ENCODE measurements at regions of chr2 and their contacts with region 1.

Region 1: GRCh38 chr2:239267288-239267951 is 133.4 kb downstream of the HDAC4 start:
- DNase-seq: peak; percentile 75
- ATAC-seq: peak; percentile 96
- H3K4me3 Mint-ChIP-seq: peak overlapping the region; percentile 73
- H3K27ac Mint-ChIP-seq: peak overlapping the region; percentile 44
- H3K4me1 Mint-ChIP-seq: peaks cover 59% of the 10 kb centered on the region
- H3K27me3 Mint-ChIP-seq: peaks cover 55% of the 10 kb centered on the region
- CTCF ChIP-seq: no peak

Region 2: DNA sequence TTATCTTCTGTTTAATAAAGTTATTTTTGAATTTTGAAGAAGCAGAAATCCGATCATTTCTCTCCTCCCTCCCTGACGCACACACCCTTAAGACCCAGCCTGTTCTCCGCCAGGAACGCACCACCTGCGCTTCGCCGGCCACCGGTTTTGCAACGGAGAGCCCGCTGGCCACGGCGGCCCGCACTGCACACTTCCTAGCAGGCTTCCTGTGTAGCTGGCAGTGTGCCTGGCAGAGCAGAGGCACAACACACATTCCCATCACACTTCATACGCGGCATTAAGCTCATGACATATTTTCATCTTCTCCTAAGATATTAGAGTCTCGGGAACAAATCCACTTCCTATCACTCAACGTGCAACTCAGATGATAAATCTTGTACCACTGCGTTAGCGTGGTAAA is 14.6 kb before region 1 on chr2:
- CTCF ChIA-PET with region 1: interaction called, 11 read pairs
- POLR2A ChIA-PET with region 1: no interaction called
- intact Hi-C with region 1: loop called (anchors 1 kb)
- DNase-seq: no peak
- ATAC-seq: peak; percentile 49
- H3K4me3 Mint-ChIP-seq: peak overlapping the region; percentile 74
- H3K27ac Mint-ChIP-seq: no peak overlapping the region
- H3K4me1 Mint-ChIP-seq: peaks cover 51% of the 10 kb centered on the region
- H3K27me3 Mint-ChIP-seq: peaks cover 19% of the 10 kb centered on the region
- CTCF ChIP-seq: no peak

Region 3: GRCh38 chr2:239293775-239294430 is 26.5 kb after region 1 on chr2:
- CTCF ChIA-PET with region 1: interaction called, 12 read pairs
- POLR2A ChIA-PET with region 1: interaction called, 6 read pairs
- intact Hi-C with region 1: no loop called
- DNase-seq: no peak
- ATAC-seq: peak; percentile 85
- H3K4me3 Mint-ChIP-seq: peak overlapping the region; percentile 28
- H3K27ac Mint-ChIP-seq: no peak overlapping the region
- H3K4me1 Mint-ChIP-seq: peaks cover 71% of the 10 kb centered on the region
- H3K27me3 Mint-ChIP-seq: peaks cover 4% of the 10 kb centered on the region
- CTCF ChIP-seq: no peak

Region 4: DNA sequence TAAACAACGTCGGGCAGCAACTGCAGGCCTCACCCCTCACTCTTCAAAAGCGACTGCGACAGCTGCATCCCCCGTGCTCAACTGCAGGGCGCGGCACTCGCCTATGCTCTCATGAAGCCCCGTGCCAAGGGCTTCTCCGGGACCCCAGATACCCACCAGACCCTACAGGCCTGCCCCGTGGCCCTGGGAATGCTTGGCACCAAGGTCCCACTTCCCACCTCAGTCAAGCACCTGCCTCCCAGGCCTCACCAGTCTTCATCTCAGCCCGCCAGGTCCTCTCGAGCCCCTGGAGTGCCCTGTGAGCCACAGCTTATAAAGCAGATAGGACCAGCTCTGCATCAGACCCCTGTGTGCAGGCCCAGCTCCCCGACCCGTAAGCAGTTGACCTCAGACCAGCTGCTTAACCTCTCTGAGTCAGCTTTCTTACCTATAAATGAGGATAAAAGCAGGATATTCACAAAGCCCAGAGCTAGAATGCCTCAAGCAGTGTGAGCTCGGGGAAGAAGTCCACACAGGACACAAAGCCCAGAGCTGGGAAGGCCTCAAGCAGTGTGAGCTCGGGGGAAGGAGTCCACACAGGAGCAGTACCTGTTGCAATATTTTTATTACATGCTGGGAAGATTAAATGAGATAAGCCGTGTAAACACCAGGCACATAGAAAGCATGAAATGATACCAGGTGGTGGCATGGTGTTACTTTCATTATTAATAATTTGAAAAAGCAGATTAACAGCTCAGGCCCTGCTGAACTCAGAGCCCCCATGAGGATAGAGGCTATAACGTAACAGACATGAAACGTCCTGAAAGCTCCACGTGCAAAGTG is 36.5 kb after region 1 on chr2:
- CTCF ChIA-PET with region 1: interaction called, 4 read pairs
- POLR2A ChIA-PET with region 1: interaction called, 3 read pairs
- intact Hi-C with region 1: loop called (anchors 5 kb)
- DNase-seq: peak; percentile 13
- ATAC-seq: peak; percentile 82
- H3K4me3 Mint-ChIP-seq: peak overlapping the region; percentile 29
- H3K27ac Mint-ChIP-seq: peak overlapping the region; percentile 11
- H3K4me1 Mint-ChIP-seq: peaks cover 44% of the 10 kb centered on the region
- H3K27me3 Mint-ChIP-seq: no peaks in the 10 kb centered on the region
- CTCF ChIP-seq: no peak

Region 5: GRCh38 chr2:239380831-239381708 is 113.7 kb after region 1 on chr2:
- CTCF ChIA-PET with region 1: interaction called, 10 read pairs
- POLR2A ChIA-PET with region 1: interaction called, 12 read pairs
- intact Hi-C with region 1: loop called (anchors 1 kb)
- DNase-seq: peak; percentile 55
- ATAC-seq: peak; percentile 66
- H3K4me3 Mint-ChIP-seq: peak overlapping the region; percentile 85
- H3K27ac Mint-ChIP-seq: peak overlapping the region; percentile 91
- H3K4me1 Mint-ChIP-seq: peaks cover 43% of the 10 kb centered on the region
- H3K27me3 Mint-ChIP-seq: no peaks in the 10 kb centered on the region
- CTCF ChIP-seq: no peak

Region 6: DNA sequence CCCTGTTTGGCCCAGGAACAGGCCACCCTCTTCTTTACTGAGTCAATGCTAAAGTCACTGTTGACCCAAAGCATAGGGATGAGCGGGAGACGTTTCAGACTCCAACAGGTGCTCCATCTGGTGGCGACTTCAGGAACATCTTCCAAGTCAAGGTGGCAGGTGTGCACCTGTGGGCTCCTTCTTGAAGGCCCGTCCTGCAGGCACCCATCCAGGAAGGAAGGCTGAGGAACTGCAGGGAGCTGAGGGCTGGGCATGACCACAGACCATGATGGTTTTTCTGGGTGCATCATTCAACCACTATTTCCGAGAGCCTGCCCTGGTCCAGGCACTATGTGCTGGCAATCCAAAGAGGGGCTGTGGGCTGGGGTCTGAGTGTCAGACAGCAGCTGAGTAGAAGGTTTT is 614.9 kb after region 1 on chr2:
- CTCF ChIA-PET with region 1: interaction called, 3 read pairs
- POLR2A ChIA-PET with region 1: no interaction called
- intact Hi-C with region 1: loop called (anchors 1 kb)
- DNase-seq: no peak
- ATAC-seq: no peak
- H3K4me3 Mint-ChIP-seq: no peak overlapping the region
- H3K27ac Mint-ChIP-seq: no peak overlapping the region
- H3K4me1 Mint-ChIP-seq: peaks cover 12% of the 10 kb centered on the region
- H3K27me3 Mint-ChIP-seq: peaks cover 21% of the 10 kb centered on the region
- CTCF ChIP-seq: no peak

Region 7: GRCh38 chr2:239944694-239945551 is 677.5 kb after region 1 on chr2:
- CTCF ChIA-PET with region 1: no interaction called
- POLR2A ChIA-PET with region 1: no interaction called
- intact Hi-C with region 1: no loop called
- DNase-seq: no peak
- ATAC-seq: no peak
- H3K4me3 Mint-ChIP-seq: no peak overlapping the region
- H3K27ac Mint-ChIP-seq: no peak overlapping the region
- H3K4me1 Mint-ChIP-seq: peaks cover 10% of the 10 kb centered on the region
- H3K27me3 Mint-ChIP-seq: no peaks in the 10 kb centered on the region
- CTCF ChIP-seq: no peak

Measured in activated B cell treated with CpG ODN at 0.5 μM for 24 hours (primary cell).